ENCODE measurements at regions of chr18 and their contacts with region 1.

Region 1: DNA sequence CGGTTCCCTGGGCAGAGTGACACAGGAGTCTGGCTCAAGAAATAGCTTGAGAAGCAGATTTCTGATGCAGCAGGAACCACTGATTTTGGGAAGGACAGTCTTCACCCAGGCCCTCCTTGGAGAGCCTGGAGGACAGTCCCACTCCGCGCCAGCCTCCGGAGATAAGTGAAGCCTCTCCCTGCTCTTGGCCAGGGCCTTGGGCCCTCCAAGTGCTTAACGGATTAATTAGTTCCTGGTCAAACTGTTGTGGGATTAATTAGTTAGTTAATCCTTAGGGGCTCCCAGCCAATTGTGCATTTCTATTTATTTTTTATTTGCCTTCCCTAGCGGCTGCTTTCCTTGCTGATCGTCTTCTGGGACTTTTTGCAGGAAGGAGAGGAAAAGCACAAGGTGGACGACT is 19.6 kb downstream of the CPLX4 start:
- DNase-seq: no peak
- H3K4me3 Mint-ChIP-seq: no peak overlapping the region
- H3K27ac Mint-ChIP-seq: no peak overlapping the region
- H3K4me1 Mint-ChIP-seq: peaks cover 6% of the 10 kb centered on the region
- H3K27me3 Mint-ChIP-seq: peaks cover 19% of the 10 kb centered on the region

Region 2: DNA sequence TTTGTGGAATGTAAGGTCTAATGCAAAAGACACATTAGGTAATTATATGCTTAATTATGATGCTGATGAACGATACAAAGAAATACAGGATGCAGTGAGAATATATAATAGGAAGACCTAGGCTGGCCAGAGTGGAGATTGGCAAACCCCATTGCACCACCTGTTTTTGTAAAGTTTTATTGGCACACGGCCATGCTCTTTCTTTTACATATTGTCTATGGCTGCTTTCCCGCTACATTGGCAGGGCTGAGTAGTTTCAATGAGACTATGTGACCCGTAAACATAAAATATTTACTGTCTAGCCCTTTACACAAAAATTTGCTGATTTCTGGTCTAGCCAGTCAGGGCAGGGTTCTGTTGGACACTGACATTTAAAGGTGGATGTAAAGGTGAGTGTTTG is 153.8 kb before region 1 on chr18:
- intact Hi-C with region 1: no loop called
- DNase-seq: no peak
- H3K4me3 Mint-ChIP-seq: no peak overlapping the region
- H3K27ac Mint-ChIP-seq: no peak overlapping the region
- H3K4me1 Mint-ChIP-seq: peaks cover 76% of the 10 kb centered on the region
- H3K27me3 Mint-ChIP-seq: no peaks in the 10 kb centered on the region

Region 3: DNA sequence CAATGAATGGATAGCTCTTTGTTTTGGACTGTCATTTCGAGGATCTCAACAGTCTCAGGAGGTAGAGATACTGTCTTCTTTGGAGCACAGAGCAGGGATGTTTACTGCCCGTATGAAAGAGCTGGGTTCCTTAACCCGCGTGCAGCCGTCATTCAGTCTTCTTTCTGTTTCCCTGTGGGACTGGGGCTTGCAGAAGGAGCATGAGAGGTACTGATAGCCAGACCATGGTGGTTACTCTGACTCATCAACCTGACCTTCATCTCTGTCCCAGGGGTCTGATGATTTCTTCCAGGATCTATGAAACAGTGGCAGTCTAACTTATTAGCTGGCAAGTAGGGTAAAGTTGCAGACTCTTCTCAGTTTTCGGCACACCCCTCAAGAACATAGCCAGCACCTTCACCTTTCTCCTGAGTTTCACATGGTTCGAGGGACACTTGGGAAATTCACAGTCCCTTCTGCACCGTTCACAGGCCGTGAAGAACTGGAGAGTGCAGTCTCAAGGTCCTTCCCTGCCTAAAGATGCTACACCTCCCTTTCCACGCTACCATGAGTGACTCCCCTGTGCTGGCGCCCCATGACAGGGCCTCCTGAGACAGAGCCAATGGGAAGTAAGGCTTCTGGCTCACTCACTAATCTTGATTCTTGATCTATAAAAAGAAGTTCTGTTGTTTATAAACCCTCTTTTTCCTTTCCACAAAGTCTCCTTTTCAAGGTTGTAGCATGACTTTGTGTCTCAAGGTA is 847.5 kb after region 1 on chr18:
- intact Hi-C with region 1: loop called (anchors 10 kb)
- DNase-seq: no peak
- H3K4me3 Mint-ChIP-seq: no peak overlapping the region
- H3K27ac Mint-ChIP-seq: no peak overlapping the region
- H3K4me1 Mint-ChIP-seq: no peaks in the 10 kb centered on the region
- H3K27me3 Mint-ChIP-seq: no peaks in the 10 kb centered on the region

Measured in activated T-helper 1 cell treated with anti-CD3 and anti-CD28 coated beads, Interleukin-12 subunit alpha, Interleukin-12 subunit beta, Interleukin-2, Interleukin-4 antibody, amounts not matched to agents 30 ng/mL and 10 ng/mL and 1 ng/mL, durations not matched to agents 14 hours and 24 hours and 36 hours (primary cell).